MCF 10A (cell line): ENCODE measurements at regions of chr14 and their contacts with region 1.

Region 1: DNA sequence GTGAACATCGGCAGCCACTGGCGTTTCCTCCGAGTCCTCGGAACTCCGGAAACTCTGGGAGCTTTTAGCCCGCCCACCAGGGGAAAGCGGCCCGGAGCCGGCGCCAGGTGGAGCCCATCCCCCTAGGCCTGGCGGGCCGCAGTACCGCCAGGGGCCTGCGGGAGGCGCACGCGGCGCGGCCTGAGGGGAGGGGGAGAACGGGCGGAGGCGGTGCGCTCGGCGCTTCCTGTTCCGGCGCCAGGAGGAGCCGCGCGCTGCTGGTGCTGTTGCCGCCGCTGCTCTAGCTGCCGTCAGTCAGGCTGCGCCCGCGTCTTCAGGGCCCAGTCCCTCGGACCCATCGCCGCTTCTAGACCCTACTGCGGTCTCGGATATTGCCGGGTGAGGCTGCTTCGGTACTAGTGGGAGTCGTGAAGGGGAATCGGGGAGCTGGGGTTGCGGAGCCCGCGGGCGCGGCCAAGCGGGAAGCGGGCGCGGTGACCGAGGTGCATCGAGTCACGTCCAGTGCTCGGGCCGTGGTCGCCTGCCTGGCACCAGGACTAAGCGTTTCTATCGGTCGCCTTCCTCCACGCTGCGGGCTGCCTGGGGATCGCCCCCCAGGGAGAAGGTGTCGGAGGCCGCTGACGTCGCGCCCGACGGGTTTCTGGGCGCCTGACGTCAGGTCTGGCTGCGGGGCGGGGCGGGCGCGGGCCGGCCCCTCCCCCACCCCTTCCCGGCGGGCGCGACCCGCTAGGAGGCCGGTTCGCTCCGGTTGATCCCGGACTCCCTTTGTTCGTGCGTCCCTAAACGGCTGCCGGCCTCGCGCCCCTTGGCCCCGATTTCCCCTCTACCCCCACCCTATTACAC is at the start of gene MAPK1IP1L:
- DNase-seq: peak; percentile 94
- H3K4me3 Mint-ChIP-seq: peak within 1 kb of the TSS; percentile 83
- H3K27ac Mint-ChIP-seq: peak within 1 kb of the TSS; percentile 98
- H3K4me1 Mint-ChIP-seq: peaks cover 16% of the 10 kb centered on the region
- H3K27me3 Mint-ChIP-seq: no peaks in the 10 kb centered on the region
- CTCF ChIP-seq: peak; percentile 99
- total RNA-seq, gene MAPK1IP1L: 118 and 123 TPM in 2 replicates

Region 2: DNA sequence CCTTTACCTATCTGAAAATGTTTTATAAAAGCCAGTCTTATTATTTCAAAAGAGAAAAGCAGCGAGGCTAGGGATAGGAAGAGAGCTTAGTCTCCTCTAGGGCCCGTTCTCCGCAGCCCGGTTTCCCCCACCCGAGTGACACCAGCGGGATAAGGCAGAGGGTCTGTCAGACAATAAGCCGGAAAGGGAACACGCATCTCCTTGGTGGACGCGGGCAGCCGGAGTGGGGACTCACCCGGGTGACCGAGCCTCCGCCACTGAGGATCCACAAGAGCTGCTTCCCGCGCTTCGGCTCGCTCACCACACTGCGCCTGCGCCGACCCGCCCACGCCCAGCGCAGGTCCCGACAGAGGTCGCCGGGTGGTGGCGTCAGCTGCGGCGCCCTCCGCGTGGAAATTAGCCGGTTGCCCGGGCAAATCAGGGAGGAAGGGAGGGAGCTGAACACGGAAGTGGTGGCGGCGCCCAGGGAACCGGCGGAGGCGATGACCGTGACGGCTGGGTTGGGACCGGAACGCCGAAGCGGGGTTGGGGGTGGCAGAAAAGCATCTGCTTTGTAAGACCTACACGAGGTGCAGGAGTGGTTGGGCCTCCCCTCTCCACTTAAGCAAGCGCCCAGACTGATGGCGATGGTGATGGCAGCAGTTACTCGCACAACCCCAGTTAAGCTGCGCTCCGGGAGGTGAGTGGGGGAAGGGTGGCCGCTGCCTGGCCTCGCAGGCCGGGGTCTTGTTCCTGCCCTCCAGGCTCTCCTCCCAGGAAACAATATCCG is 24.7 kb before region 1 on chr14 and contains the starts of genes SOCS4 and WDHD1:
- CTCF ChIA-PET with region 1: interaction called, 7 read pairs
- POLR2A ChIA-PET with region 1: interaction called, 139 read pairs
- intact Hi-C with region 1: no loop called
- DNase-seq: peak; percentile 93
- H3K4me3 Mint-ChIP-seq: peak within 1 kb of the TSS; percentile 91
- H3K27ac Mint-ChIP-seq: peak within 1 kb of the TSS; percentile 88
- H3K4me1 Mint-ChIP-seq: peaks cover 20% of the 10 kb centered on the region
- H3K27me3 Mint-ChIP-seq: no peaks in the 10 kb centered on the region
- CTCF ChIP-seq: no peak
- total RNA-seq, gene SOCS4: 24.6 and 29.6 TPM in 2 replicates
- total RNA-seq, gene WDHD1: 5.8 and 6.5 TPM in 2 replicates

Region 3: GRCh38 chr14:55062517-55063351 is 11.1 kb after region 1 on chr14:
- CTCF ChIA-PET with region 1: interaction called, 17 read pairs
- POLR2A ChIA-PET with region 1: interaction called, 69 read pairs
- intact Hi-C with region 1: no loop called
- DNase-seq: peak; percentile 54
- H3K4me3 Mint-ChIP-seq: no peak overlapping the region
- H3K27ac Mint-ChIP-seq: peak overlapping the region; percentile 46
- H3K4me1 Mint-ChIP-seq: peaks cover 7% of the 10 kb centered on the region
- H3K27me3 Mint-ChIP-seq: no peaks in the 10 kb centered on the region
- CTCF ChIP-seq: no peak

Region 4: GRCh38 chr14:55077155-55077554 is 25.5 kb after region 1 on chr14:
- CTCF ChIA-PET with region 1: interaction called, 33 read pairs
- POLR2A ChIA-PET with region 1: interaction called, 356 read pairs
- intact Hi-C with region 1: no loop called
- DNase-seq: peak; percentile 83
- H3K4me3 Mint-ChIP-seq: peak overlapping the region; percentile 70
- H3K27ac Mint-ChIP-seq: peak overlapping the region; percentile 100
- H3K4me1 Mint-ChIP-seq: peaks cover 50% of the 10 kb centered on the region
- H3K27me3 Mint-ChIP-seq: no peaks in the 10 kb centered on the region
- CTCF ChIP-seq: no peak

Region 5: DNA sequence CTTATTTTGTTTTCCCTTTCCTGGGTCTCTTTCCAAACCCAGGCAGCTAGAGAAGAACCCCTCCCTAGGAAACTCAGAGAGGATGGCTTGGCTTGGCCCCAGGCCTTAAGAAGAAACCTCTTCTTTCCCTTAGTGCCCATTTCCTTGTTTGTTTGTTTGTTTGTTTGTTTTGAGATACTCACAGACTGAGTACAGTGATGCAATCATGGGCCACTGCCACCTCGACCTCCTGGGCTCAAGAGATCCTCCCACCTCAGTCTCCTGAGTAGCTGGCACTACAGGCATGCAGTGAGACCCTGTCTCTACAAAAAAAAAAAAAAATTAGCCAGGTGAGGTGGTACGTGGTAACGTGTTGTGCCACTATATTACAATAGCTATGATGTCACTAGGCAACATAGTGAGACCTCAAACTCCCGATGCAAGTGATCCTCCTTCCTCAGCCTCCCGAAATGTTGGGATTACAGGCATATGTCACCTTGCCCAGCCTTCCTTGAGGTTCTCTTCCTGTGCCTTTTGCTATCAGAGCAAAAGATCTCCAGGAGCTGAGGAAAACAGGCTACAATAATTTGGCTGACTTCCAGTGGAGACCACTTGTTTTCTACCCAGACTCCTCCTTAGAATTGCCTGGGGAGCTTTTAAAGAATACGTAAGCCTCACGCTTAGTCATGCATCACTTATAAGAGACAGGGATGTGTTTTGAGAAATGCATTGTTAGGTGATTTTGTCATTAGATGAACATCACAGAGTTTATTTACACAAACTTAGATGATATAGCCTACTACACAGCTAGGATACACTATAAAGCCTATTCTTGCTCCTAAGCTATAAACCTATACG is 42.9 kb after region 1 on chr14:
- CTCF ChIA-PET with region 1: interaction called, 4 read pairs
- POLR2A ChIA-PET with region 1: interaction called, 11 read pairs
- intact Hi-C with region 1: loop called (anchors 1 kb)
- DNase-seq: peak; percentile 42
- H3K4me3 Mint-ChIP-seq: no peak overlapping the region
- H3K27ac Mint-ChIP-seq: no peak overlapping the region
- H3K4me1 Mint-ChIP-seq: peaks cover 17% of the 10 kb centered on the region
- H3K27me3 Mint-ChIP-seq: no peaks in the 10 kb centered on the region
- CTCF ChIP-seq: no peak

Region 6: GRCh38 chr14:55107766-55108554 is 56.3 kb after region 1 on chr14:
- CTCF ChIA-PET with region 1: interaction called, 3 read pairs
- POLR2A ChIA-PET with region 1: interaction called, 59 read pairs
- intact Hi-C with region 1: no loop called
- DNase-seq: peak; percentile 95
- H3K4me3 Mint-ChIP-seq: peak overlapping the region; percentile 61
- H3K27ac Mint-ChIP-seq: peak overlapping the region; percentile 99
- H3K4me1 Mint-ChIP-seq: peaks cover 22% of the 10 kb centered on the region
- H3K27me3 Mint-ChIP-seq: no peaks in the 10 kb centered on the region
- CTCF ChIP-seq: no peak

Region 7: DNA sequence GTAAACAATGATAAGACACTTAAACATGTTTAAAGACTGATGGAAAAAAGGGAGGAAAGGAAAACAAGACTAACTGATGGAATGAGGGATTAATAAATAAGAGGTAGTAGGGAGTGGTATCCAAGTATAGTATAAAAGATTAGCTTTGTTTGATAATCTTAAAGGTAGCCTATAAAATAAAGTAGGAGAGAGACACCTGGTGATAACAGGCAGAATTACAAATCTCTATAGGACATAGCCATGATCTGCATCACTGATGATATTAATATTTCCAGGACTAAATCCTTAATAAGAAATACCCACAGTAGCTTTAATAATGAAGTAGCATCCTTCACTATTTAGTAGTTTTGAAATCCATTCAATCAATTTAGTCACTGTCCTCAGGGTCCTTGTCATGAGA is 109.3 kb after region 1 on chr14:
- CTCF ChIA-PET with region 1: interaction called, 16 read pairs
- POLR2A ChIA-PET with region 1: interaction called, 44 read pairs
- intact Hi-C with region 1: loop called (anchors 1 kb)
- DNase-seq: peak; percentile 37
- H3K4me3 Mint-ChIP-seq: no peak overlapping the region
- H3K27ac Mint-ChIP-seq: peak overlapping the region; percentile 14
- H3K4me1 Mint-ChIP-seq: peaks cover 6% of the 10 kb centered on the region
- H3K27me3 Mint-ChIP-seq: no peaks in the 10 kb centered on the region
- CTCF ChIP-seq: peak; percentile 46

Region 8: DNA sequence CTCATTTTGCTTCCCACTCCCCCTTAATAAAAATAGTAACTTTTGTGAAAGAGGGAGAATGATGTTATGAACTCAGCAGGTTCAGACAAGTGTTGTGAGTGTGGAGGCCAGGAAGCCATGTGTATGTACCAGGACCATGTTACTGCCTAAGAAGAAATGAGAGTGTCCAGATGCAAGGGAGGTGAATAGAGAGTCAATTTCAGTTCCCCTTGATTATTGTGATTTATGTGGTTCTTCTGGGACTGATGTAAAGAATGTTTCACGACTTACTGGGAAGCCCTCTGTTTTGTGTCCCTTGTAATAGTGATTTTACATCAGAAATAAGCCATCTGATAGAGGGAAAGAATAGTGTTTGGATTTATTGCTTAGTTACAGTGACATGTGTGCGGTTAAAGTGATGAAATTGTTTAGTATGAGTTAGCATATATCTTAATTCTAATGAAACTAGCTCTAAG is 252.1 kb after region 1 on chr14:
- CTCF ChIA-PET with region 1: no interaction called
- POLR2A ChIA-PET with region 1: no interaction called
- intact Hi-C with region 1: no loop called
- DNase-seq: no peak
- H3K4me3 Mint-ChIP-seq: no peak overlapping the region
- H3K27ac Mint-ChIP-seq: no peak overlapping the region
- H3K4me1 Mint-ChIP-seq: peaks cover 30% of the 10 kb centered on the region
- H3K27me3 Mint-ChIP-seq: no peaks in the 10 kb centered on the region
- CTCF ChIP-seq: no peak